Pancreas (tissue), 10 donors: ENCODE measurements at regions of chr10 and their contacts with region 1.

Region 1: GRCh38 chr10:114470956-114471905 is 66.9 kb upstream of the AFAP1L2 start:
- DNase-seq: peak; percentile 50 to 78 (median 69)
- ATAC-seq: peak; percentile 83 to 96 (median 93)
- H3K4me3 ChIP-seq: no peak overlapping the region
- H3K27ac ChIP-seq: no peak overlapping the region
- H3K4me1 ChIP-seq: peaks cover 9 to 17% (median 15%) of the 10 kb centered on the region in 3 donors
- H3K27me3 ChIP-seq: no peaks in the 10 kb centered on the region
- CTCF ChIP-seq: peak; percentile 82 to 91 (median 88)

Region 2: GRCh38 chr10:114684085-114684821 is 213.0 kb after region 1 on chr10:
- intact Hi-C with region 1: no loop called
- DNase-seq: peak; percentile 46 to 64 (median 56)
- ATAC-seq: peak; percentile 57 to 64 (median 62)
- H3K4me3 ChIP-seq: peak overlapping the region in 2 of 4 donors; percentile 24 to 36
- H3K27ac ChIP-seq: peak overlapping the region; percentile 56 to 97 (median 82)
- H3K4me1 ChIP-seq: peaks cover 22 to 42% (median 32%) of the 10 kb centered on the region in 3 donors
- H3K27me3 ChIP-seq: no peaks in the 10 kb centered on the region
- CTCF ChIP-seq: no peak

Region 3: DNA sequence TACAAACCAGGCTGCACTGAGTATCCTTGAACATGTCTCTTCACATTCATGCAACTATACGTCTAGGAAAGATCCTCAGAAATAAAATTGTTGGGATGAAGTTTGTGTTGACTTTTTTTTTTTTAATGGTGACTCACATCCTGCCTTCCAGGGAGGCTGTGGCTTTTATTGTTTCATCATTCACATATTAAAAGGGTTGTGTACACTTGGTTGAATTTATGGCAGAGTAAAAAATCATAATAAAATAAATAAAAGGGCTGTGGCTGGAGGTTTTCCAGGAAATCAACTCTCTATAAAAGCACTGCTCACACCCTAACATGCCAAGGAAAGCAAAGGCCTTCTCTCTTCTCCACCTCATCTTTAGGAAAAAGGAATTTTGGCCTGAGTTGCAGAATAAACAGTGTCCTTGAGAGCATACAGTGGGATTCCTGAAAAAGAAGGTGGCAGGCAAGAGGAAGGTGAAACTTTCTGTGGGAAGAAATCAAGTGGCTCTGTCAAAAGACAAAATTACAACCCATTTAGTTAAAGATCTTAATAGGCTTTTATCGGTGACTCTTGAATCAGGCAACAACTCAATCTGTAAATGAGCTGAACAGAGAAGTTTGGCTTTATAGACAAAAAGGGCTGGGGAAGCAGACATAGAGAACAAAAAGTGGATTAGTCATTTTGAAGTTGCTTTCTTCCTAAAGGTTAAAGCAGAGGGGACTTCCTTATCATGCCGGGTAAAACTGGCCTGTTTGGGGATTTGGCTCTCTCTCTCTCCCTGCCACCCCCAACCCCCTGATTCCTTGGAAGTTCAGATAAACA is 308.8 kb after region 1 on chr10:
- intact Hi-C with region 1: loop called in 2 of 3 experiments (anchors 10 kb)
- DNase-seq: no peak
- ATAC-seq: peak in 3 of 4 donors; percentile 53 to 88 (median 65)
- H3K4me3 ChIP-seq: no peak overlapping the region
- H3K27ac ChIP-seq: peak overlapping the region in 1 of 4 donors; percentile 47
- H3K4me1 ChIP-seq: no peaks in the 10 kb centered on the region
- H3K27me3 ChIP-seq: no peaks in the 10 kb centered on the region
- CTCF ChIP-seq: no peak